MCF 10A (cell line): ENCODE measurements at regions of chr3 and their contacts with region 1.

Region 1: GRCh38 chr3:190345027-190345821 is 23.0 kb upstream of the CLDN1 start:
- DNase-seq: peak; percentile 94
- H3K4me3 Mint-ChIP-seq: peak overlapping the region; percentile 58
- H3K27ac Mint-ChIP-seq: peak overlapping the region; percentile 99
- H3K4me1 Mint-ChIP-seq: peaks cover 40% of the 10 kb centered on the region
- H3K27me3 Mint-ChIP-seq: no peaks in the 10 kb centered on the region
- CTCF ChIP-seq: no peak

Region 2: DNA sequence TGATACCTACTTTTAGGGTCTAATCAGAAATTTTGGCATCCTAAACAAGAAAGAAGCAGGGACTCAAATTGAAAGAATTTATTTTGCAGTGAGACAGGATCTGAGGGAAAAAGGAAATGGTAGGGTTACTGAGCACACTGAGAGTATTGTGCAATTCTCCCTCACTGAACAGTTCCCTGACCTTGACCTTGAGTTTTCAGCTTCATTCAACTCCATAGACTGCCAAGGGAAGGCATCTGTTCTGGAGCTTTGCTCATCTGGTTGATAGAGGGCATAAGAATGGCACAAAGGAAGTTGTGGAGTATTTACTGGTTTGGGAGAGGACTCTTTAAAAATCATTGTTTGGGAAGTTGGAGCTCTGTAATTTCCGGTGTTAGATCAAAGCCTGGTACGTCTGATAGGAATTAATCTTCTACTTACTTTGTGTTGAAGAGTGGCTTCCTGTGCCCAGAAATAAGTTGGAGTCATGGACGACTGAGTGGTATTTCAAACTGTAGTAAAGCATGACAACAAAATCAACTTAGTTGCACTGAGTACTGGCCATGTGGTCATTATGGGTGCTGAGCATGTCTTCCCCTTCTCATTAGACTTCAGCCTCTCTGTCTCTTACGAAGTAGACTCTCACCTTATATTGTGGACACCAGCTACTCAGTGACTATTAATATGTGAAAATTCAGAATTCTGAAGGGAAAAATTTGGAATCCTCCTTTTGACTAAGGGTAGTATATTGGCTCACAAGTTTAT is 63.7 kb before region 1 on chr3:
- CTCF ChIA-PET with region 1: no interaction called
- POLR2A ChIA-PET with region 1: no interaction called
- intact Hi-C with region 1: no loop called
- DNase-seq: peak; percentile 20
- H3K4me3 Mint-ChIP-seq: no peak overlapping the region
- H3K27ac Mint-ChIP-seq: no peak overlapping the region
- H3K4me1 Mint-ChIP-seq: peaks cover 8% of the 10 kb centered on the region
- H3K27me3 Mint-ChIP-seq: no peaks in the 10 kb centered on the region
- CTCF ChIP-seq: no peak

Region 3: DNA sequence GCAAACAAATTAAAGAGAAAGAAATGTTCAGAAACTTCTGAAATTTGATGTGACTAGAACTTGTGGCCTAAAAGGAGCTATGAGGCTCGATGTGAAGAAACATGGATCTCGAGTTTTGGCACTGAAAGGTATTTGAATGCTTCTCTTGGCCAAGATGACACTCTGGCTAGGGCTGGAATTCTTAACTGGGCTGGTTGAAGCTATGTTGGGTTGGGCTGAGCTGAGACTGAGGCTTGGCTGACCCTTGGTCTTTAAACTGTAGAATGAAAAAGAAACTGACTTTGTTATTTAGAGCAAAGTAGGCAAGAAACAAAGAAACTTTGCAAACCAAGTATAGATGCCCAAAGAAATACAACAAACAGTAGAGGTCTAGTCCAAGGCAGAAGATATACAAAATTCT is 14.6 kb after region 1 on chr3:
- CTCF ChIA-PET with region 1: interaction called, 4 read pairs
- POLR2A ChIA-PET with region 1: interaction called, 13 read pairs
- intact Hi-C with region 1: no loop called
- DNase-seq: no peak
- H3K4me3 Mint-ChIP-seq: no peak overlapping the region
- H3K27ac Mint-ChIP-seq: peak overlapping the region; percentile 8
- H3K4me1 Mint-ChIP-seq: peaks cover 22% of the 10 kb centered on the region
- H3K27me3 Mint-ChIP-seq: no peaks in the 10 kb centered on the region
- CTCF ChIP-seq: no peak

Region 4: DNA sequence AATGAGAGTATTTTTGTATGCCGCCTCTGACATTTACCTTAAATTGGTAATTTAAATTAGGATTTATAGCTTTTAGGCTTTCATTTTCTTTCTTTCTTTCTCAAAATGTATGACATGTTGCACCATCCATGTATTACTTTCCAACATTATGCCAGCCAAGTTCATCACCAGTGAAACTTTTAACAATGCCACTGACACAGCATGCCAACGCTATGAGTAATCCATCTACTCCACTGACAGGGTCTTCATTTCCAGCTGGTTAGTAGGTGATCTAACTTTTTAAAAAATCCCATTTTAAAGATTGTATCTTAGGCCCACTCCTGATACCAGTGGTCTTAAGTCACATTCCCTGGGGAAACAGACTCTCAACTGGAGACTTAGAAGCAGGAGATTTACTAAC is 20.9 kb after region 1 on chr3:
- CTCF ChIA-PET with region 1: interaction called, 5 read pairs
- POLR2A ChIA-PET with region 1: interaction called, 119 read pairs
- intact Hi-C with region 1: no loop called
- DNase-seq: peak; percentile 79
- H3K4me3 Mint-ChIP-seq: no peak overlapping the region
- H3K27ac Mint-ChIP-seq: peak overlapping the region; percentile 87
- H3K4me1 Mint-ChIP-seq: peaks cover 37% of the 10 kb centered on the region
- H3K27me3 Mint-ChIP-seq: no peaks in the 10 kb centered on the region
- CTCF ChIP-seq: no peak

Region 5: DNA sequence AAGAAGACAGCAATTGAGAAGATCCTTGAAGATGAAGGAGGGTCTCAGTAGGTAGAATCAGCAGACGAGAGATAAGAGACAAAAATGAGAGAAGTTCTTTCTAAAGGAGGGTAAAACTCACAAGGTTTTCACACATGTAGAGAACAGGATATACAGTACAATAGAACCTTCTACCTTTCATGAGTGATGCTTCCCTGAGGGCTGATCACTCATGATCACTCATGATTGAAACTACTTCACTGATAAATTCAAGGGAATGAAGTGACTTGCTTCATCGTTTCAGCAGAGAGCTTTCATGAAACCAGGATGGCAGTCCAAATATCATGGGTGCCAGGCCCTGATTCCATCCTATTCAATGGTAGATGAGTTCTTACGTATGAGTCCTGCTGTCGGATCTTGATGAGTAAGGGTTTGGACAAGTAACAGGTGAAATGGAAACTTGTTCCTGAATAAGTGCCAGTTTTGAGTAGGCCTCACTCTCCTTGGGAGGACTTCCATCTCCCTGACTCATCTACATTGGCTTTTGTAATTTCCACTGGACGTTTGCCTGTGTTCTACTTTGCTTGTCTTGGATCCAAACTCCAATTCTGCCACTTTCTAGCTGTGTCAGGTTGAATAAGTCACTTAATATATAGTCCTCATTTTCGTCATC is 33.1 kb after region 1 on chr3:
- CTCF ChIA-PET with region 1: interaction called, 14 read pairs
- POLR2A ChIA-PET with region 1: interaction called, 132 read pairs
- intact Hi-C with region 1: loop called (anchors 1 kb)
- DNase-seq: peak; percentile 98
- H3K4me3 Mint-ChIP-seq: no peak overlapping the region
- H3K27ac Mint-ChIP-seq: peak overlapping the region; percentile 2
- H3K4me1 Mint-ChIP-seq: peaks cover 55% of the 10 kb centered on the region
- H3K27me3 Mint-ChIP-seq: no peaks in the 10 kb centered on the region
- CTCF ChIP-seq: no peak

Region 6: GRCh38 chr3:190404715-190405114 is 59.5 kb after region 1 on chr3:
- CTCF ChIA-PET with region 1: no interaction called
- POLR2A ChIA-PET with region 1: no interaction called
- intact Hi-C with region 1: no loop called
- DNase-seq: no peak
- H3K4me3 Mint-ChIP-seq: no peak overlapping the region
- H3K27ac Mint-ChIP-seq: no peak overlapping the region
- H3K4me1 Mint-ChIP-seq: no peaks in the 10 kb centered on the region
- H3K27me3 Mint-ChIP-seq: no peaks in the 10 kb centered on the region
- CTCF ChIP-seq: no peak

Region 7: GRCh38 chr3:191094057-191094845 is 749.0 kb after region 1 on chr3:
- CTCF ChIA-PET with region 1: no interaction called
- POLR2A ChIA-PET with region 1: no interaction called
- intact Hi-C with region 1: no loop called
- DNase-seq: peak; percentile 78
- H3K4me3 Mint-ChIP-seq: no peak overlapping the region
- H3K27ac Mint-ChIP-seq: peak overlapping the region; percentile 78
- H3K4me1 Mint-ChIP-seq: peaks cover 9% of the 10 kb centered on the region
- H3K27me3 Mint-ChIP-seq: no peaks in the 10 kb centered on the region
- CTCF ChIP-seq: no peak